ENCODE measurements at regions of chr3 and their contacts with region 1.

Region 1: GRCh38 chr3:42247576-42248027 is 18.4 kb downstream of the CCK start:
- DNase-seq: peak; percentile 74
- H3K4me3 Mint-ChIP-seq: no peak overlapping the region
- H3K27ac Mint-ChIP-seq: no peak overlapping the region
- H3K4me1 Mint-ChIP-seq: peaks cover 10% of the 10 kb centered on the region
- H3K27me3 Mint-ChIP-seq: peaks cover 9% of the 10 kb centered on the region
- CTCF ChIP-seq: peak; percentile 87

Region 2: DNA sequence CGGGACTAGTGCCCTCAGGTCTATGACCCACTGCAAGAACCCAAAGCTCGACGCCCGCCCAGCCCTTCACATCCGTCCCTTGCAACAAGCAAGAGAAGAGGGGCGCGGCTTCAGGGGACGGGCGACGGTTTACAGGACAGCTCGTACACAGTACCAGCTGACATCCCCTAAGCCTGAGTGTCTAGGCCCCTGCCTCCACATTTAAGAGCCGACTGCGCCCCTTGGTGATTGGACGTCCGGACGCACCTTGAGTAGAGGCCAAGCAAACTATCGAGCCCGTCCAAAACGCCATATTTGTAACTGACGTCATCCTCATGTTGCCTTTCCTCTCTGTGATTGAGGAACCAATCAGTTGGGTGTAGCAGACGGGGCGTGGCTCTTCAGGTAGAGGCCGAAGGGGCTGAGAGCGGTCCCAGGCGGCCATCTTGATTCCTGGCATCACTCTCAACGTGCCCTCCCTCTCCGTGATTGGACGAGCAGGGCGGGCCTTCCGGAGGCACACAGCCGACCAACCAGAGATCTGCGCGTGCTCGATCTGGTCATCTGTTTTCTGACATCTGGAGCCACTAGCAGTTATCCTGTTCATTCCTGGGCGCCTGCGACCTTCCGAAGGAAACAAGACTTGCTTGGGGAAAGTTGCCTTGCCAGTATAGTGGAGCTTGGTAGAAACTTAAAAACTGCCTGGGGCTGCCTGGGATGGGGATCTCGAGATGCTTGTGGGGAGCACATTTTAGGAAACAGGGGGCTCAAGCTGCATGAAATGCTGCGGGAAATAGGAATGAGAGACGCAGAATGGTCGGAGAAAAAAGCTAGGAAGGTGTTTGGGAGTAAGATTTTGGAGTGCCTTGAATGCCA is 1794.5 kb before region 1 on chr3:
- CTCF ChIA-PET with region 1: no interaction called
- POLR2A ChIA-PET with region 1: no interaction called
- intact Hi-C with region 1: no loop called
- DNase-seq: peak; percentile 99
- H3K4me3 Mint-ChIP-seq: peak overlapping the region; percentile 90
- H3K27ac Mint-ChIP-seq: peak overlapping the region; percentile 95
- H3K4me1 Mint-ChIP-seq: peaks cover 20% of the 10 kb centered on the region
- H3K27me3 Mint-ChIP-seq: no peaks in the 10 kb centered on the region
- CTCF ChIP-seq: no peak

Region 3: GRCh38 chr3:42264399-42265058 is 16.9 kb after region 1 on chr3:
- CTCF ChIA-PET with region 1: interaction called, 20 read pairs
- POLR2A ChIA-PET with region 1: interaction called, 3 read pairs
- intact Hi-C with region 1: no loop called
- DNase-seq: no peak
- H3K4me3 Mint-ChIP-seq: no peak overlapping the region
- H3K27ac Mint-ChIP-seq: no peak overlapping the region
- H3K4me1 Mint-ChIP-seq: no peaks in the 10 kb centered on the region
- H3K27me3 Mint-ChIP-seq: peaks cover 12% of the 10 kb centered on the region
- CTCF ChIP-seq: no peak

Region 4: GRCh38 chr3:42276141-42277132 is 28.8 kb after region 1 on chr3:
- CTCF ChIA-PET with region 1: no interaction called
- POLR2A ChIA-PET with region 1: no interaction called
- intact Hi-C with region 1: no loop called
- DNase-seq: no peak
- H3K4me3 Mint-ChIP-seq: no peak overlapping the region
- H3K27ac Mint-ChIP-seq: no peak overlapping the region
- H3K4me1 Mint-ChIP-seq: no peaks in the 10 kb centered on the region
- H3K27me3 Mint-ChIP-seq: no peaks in the 10 kb centered on the region
- CTCF ChIP-seq: no peak

Region 5: GRCh38 chr3:42336103-42336502 is 88.5 kb after region 1 on chr3:
- CTCF ChIA-PET with region 1: no interaction called
- POLR2A ChIA-PET with region 1: no interaction called
- intact Hi-C with region 1: no loop called
- DNase-seq: no peak
- H3K4me3 Mint-ChIP-seq: no peak overlapping the region
- H3K27ac Mint-ChIP-seq: no peak overlapping the region
- H3K4me1 Mint-ChIP-seq: no peaks in the 10 kb centered on the region
- H3K27me3 Mint-ChIP-seq: peaks cover 6% of the 10 kb centered on the region
- CTCF ChIP-seq: no peak

Region 6: DNA sequence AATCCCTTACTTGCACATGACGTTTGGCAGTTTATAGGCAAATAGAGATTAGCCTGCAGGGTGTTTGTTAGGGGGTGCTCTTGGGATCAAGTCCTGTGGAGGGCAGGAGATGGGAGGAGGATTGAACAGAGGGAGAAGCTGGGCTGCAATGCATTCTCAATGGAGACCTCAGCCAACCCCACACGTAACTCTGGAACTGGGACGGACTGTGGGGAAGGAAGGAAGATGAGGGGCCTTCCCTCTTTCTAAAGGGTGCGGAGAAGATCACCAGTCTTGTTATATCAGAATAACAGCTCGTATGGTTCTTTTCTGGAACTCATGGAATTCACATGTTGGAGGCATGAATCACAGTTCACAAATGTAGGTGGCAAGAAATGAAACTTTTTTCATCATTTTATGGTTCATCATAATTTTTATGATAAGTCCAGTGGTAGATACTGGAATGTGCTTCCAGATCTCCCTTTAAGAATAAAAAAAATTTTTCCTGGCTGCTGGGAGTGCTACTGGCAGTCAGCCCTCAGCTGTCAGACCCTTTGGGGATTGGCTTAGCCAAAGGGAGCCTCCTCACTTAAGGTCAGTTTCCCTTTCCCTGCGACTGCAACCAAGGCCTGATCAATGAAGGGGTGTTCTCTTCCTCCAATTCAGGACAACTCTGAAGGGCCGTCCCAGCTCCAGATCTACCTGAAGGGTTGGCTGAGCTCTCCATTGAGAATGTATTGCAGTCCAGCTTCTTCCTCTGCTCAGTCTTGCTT is 183.4 kb after region 1 on chr3:
- CTCF ChIA-PET with region 1: interaction called, 26 read pairs
- POLR2A ChIA-PET with region 1: no interaction called
- intact Hi-C with region 1: no loop called
- DNase-seq: no peak
- H3K4me3 Mint-ChIP-seq: no peak overlapping the region
- H3K27ac Mint-ChIP-seq: no peak overlapping the region
- H3K4me1 Mint-ChIP-seq: no peaks in the 10 kb centered on the region
- H3K27me3 Mint-ChIP-seq: peaks cover 17% of the 10 kb centered on the region
- CTCF ChIP-seq: no peak

Region 7: GRCh38 chr3:42443819-42444436 is 196.3 kb after region 1 on chr3:
- CTCF ChIA-PET with region 1: interaction called, 166 read pairs
- POLR2A ChIA-PET with region 1: interaction called, 16 read pairs
- intact Hi-C with region 1: loop called (anchors 1 kb)
- DNase-seq: peak; percentile 83
- H3K4me3 Mint-ChIP-seq: no peak overlapping the region
- H3K27ac Mint-ChIP-seq: no peak overlapping the region
- H3K4me1 Mint-ChIP-seq: no peaks in the 10 kb centered on the region
- H3K27me3 Mint-ChIP-seq: peaks cover 11% of the 10 kb centered on the region
- CTCF ChIP-seq: peak; percentile 97

Region 8: DNA sequence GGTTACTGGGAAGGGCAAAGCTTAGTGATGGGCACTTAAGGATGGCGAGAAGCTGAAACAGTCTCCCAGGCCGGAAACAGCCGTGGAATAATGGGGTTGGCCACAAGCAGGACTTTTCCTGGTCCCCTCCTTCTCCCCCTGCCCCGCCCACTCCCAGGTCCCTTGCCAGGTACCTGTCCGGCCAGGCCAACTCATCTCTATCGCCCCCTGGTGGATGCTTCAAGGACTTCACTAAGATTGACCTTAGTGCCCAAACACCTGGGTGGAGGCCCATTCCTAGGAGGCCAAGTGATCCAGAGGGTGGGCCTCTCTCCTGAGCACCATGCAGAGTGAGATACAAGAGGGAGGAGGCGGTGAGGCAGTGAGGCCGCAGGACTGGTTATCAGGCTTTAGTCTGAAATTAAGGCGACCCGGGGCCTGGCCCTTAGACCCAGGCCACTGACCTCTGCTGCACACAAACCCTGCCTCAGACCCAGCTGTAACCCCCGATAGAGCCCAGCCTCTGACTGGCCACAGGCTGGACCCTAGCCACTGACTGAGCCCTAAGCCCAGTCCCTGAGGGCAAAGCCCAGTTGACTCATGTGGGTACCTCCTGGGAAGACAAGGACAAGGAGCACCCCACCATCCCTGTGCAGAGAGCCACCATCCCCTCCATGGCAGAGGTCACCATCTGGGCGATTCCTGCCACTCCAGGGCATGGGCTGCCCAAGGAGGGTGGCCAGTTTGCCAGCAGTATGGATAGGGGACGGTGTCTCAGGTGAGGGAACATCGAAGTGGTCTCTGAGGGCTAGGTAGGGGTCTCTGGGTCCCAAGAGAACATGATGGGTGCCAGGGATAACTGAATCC is 292.5 kb after region 1 on chr3:
- CTCF ChIA-PET with region 1: interaction called, 19 read pairs
- POLR2A ChIA-PET with region 1: no interaction called
- intact Hi-C with region 1: loop called (anchors 2 kb)
- DNase-seq: peak; percentile 70
- H3K4me3 Mint-ChIP-seq: no peak overlapping the region
- H3K27ac Mint-ChIP-seq: no peak overlapping the region
- H3K4me1 Mint-ChIP-seq: no peaks in the 10 kb centered on the region
- H3K27me3 Mint-ChIP-seq: no peaks in the 10 kb centered on the region
- CTCF ChIP-seq: peak; percentile 87

Region 9: DNA sequence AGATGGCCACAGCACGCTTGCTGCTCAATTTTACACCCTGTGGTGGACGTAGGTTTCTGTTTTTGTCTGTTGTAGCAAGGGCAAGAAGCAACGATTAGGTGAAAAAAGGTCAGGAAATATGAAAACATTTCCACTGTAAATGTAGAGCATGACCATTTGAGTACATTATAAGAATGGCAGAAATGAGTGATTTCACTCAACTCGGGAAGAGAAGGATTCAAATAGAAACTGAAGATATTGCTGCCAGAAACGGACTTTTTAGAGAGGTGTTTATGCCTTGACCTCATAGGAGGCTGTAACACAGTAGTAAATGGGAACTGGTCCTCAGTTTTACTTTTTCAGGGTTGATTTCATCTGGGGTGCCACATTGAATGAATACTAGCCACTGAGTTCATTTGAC is 698.4 kb after region 1 on chr3:
- CTCF ChIA-PET with region 1: no interaction called
- POLR2A ChIA-PET with region 1: no interaction called
- intact Hi-C with region 1: no loop called
- DNase-seq: no peak
- H3K4me3 Mint-ChIP-seq: no peak overlapping the region
- H3K27ac Mint-ChIP-seq: no peak overlapping the region
- H3K4me1 Mint-ChIP-seq: no peaks in the 10 kb centered on the region
- H3K27me3 Mint-ChIP-seq: peaks cover 10% of the 10 kb centered on the region
- CTCF ChIP-seq: no peak